Endothelial cell of umbilical vein (primary cell): ENCODE measurements at regions of chr11 and their contacts with region 1.

Region 1: DNA sequence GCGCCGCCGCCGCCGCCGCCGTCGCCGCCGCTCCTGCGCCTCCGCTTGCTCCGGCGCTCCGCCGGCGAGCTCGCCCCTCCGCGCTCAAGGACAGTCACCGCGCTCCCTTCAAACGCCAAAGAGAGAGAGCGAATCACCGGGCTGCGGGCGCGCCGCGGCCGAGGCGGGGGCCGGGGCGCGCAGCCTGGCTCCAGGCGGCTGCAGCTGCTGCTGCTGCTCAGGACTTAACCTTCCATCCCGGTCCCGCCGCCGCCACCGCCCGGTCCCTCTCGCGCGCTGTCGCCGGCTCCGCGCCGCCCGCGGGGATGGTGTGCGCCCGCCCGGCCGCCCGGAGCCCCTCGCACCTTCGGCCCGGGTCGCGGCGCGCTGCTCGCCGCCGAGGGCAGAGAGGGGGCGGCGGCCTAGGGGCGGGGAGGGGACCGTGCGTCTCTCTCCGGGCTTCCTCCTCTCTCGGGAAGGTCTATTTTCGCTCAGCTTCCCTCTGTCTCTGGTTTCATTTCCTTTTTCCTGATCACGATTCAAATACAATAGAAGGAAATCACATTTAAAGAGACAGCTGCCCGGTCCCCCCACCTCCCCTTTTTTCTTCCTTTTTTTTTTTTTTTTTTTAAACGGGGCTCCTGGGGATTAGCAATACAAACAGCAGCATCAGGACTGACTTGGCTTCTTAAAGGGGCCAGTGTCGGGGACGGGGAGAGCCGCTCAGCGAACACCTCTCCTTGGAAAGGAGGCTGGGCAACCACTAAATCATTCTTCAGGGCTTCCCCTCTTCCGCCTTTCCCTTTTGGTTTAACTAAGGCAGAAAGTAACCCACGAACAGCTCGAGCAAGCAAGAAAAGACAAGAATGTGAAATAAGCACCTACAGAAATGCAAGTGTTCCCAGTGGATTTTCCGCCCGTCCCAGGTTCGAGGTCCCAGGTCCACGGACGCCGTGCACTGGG is 22.1 kb downstream of the LMO2 start:
- DNase-seq: peak; percentile 92
- H3K4me3 ChIP-seq: peak overlapping the region; percentile 56 to 87 (median 76)
- H3K27ac ChIP-seq: peak overlapping the region; percentile 62
- H3K4me1 ChIP-seq: peaks cover 23% of the 10 kb centered on the region
- H3K27me3 ChIP-seq: peaks cover 0 to 2% of the 10 kb centered on the region in 2 experiments
- CTCF ChIP-seq: no peak
- POLR2A ChIP-seq: no peak

Region 2: DNA sequence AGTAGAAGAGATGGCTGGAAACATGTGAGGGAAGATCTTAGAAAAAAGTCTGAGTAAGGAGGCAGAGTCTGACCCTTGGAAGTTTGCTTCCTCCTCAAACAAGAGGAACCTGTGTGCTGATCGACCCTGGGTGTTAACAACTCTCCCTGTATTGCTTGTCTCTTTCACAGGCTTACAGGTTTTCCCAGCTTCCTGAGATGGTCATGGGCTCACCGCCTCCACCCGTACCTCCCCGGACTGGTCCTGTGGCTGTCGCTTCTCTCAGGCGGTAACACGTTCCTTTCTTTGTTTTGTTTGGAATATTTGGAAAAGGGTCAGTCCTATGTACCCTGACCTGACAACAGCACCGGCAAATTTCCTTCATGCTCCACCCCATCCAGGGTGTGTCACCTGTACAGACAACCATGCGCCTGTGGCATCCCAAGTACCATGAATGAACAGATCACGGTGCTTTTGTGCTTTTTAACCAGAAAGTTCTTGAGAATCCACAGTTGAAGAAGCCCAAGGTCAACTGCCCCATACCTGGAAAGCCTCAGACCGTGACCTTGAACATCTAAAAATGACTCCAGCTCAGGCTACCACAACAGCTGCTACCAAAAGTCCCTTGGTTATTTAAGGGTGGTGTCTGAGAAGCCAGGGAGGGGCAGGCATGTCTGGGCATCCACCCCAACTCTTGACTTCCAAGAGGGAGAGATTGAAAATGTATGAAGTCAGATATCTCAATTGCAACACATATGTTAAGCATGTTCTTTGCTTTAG is 213.7 kb before region 1 on chr11:
- CTCF ChIA-PET with region 1: no interaction called
- POLR2A ChIA-PET with region 1: no interaction called
- dilution Hi-C with region 1: no loop called
- intact Hi-C with region 1: no loop called
- DNase-seq: no peak
- H3K4me3 ChIP-seq: no peak overlapping the region
- H3K27ac ChIP-seq: no peak overlapping the region
- H3K4me1 ChIP-seq: no peaks in the 10 kb centered on the region
- H3K27me3 ChIP-seq: no peaks in the 10 kb centered on the region
- CTCF ChIP-seq: no peak
- POLR2A ChIP-seq: no peak

Region 3: DNA sequence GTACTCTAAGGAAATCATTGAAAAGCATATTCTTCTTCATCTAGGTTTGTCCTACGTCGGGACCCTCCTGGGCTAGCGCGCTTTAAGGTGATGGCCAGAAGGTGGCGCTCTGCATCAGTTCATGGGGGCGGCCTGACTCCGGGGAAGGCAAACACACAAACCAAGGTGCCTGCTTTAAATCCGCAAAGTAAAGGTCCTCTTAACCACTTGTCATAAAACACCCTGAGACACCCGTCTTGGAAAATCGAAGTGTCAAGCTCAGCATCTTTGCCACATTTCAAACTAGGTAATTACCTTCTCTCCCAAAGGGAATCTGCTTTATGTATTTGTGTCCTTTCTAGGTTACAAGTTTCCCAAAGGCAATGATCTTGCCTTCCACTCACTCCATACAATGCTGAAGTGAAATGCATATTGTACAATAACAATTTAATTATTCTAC is 11.8 kb before region 1 on chr11:
- CTCF ChIA-PET with region 1: interaction called, 39 read pairs
- POLR2A ChIA-PET with region 1: no interaction called
- dilution Hi-C with region 1: no loop called
- intact Hi-C with region 1: loop called (anchors 1 kb)
- DNase-seq: peak; percentile 85
- H3K4me3 ChIP-seq: no peak overlapping the region
- H3K27ac ChIP-seq: no peak overlapping the region
- H3K4me1 ChIP-seq: no peaks in the 10 kb centered on the region
- H3K27me3 ChIP-seq: no peaks in the 10 kb centered on the region
- CTCF ChIP-seq: peak; percentile 89 to 92
- POLR2A ChIP-seq: no peak

Region 4: DNA sequence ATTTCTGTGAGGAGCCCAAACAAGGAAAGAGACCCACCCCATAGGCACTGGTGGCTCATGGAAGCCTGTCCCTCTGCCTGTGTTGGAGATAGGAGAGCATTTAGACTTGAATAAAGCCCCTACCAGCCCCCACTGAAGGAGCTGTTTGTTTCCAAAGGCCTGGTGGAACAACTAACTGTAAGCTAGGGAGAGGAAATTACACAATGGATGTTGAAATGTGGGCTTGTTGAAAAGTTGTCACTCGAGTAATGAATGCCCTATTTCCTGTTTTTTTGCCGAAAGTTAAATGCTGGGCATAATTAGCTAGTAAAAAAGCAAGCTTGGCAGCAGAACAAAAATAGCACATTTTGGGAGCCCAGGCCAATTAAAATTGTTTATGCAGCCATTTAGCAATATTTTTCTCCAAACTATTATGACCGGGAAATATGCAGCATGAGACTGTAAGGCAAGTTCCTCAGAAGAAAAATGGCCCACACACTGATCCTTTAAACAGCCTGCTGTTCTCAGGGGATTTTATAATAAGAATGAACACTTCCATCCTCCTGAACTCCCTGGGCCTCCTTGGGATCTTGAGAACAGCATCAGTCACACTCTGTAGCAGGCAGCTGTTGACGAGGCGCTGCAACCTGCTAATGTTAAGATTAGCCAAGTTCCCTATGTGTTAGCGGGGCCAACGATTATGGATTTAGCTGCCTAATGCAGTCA is 60.7 kb after region 1 on chr11:
- CTCF ChIA-PET with region 1: interaction called, 7 read pairs
- POLR2A ChIA-PET with region 1: interaction called, 3 read pairs
- dilution Hi-C with region 1: no loop called
- intact Hi-C with region 1: loop called (anchors 2 kb)
- DNase-seq: peak; percentile 98
- H3K4me3 ChIP-seq: peak overlapping the region in 1 of 3 experiments; percentile 15
- H3K27ac ChIP-seq: peak overlapping the region; percentile 97
- H3K4me1 ChIP-seq: peaks cover 48% of the 10 kb centered on the region
- H3K27me3 ChIP-seq: no peaks in the 10 kb centered on the region
- CTCF ChIP-seq: no peak
- POLR2A ChIP-seq: peak; percentile 68

Region 5: GRCh38 chr11:33970984-33971466 is 101.3 kb after region 1 on chr11:
- CTCF ChIA-PET with region 1: interaction called, 65 read pairs
- POLR2A ChIA-PET with region 1: no interaction called
- dilution Hi-C with region 1: no loop called
- intact Hi-C with region 1: loop called (anchors 1 kb)
- DNase-seq: peak; percentile 72
- H3K4me3 ChIP-seq: no peak overlapping the region
- H3K27ac ChIP-seq: no peak overlapping the region
- H3K4me1 ChIP-seq: no peaks in the 10 kb centered on the region
- H3K27me3 ChIP-seq: peaks cover 0 to 4% of the 10 kb centered on the region in 2 experiments
- CTCF ChIP-seq: peak; percentile 70 to 74
- POLR2A ChIP-seq: no peak

Region 6: DNA sequence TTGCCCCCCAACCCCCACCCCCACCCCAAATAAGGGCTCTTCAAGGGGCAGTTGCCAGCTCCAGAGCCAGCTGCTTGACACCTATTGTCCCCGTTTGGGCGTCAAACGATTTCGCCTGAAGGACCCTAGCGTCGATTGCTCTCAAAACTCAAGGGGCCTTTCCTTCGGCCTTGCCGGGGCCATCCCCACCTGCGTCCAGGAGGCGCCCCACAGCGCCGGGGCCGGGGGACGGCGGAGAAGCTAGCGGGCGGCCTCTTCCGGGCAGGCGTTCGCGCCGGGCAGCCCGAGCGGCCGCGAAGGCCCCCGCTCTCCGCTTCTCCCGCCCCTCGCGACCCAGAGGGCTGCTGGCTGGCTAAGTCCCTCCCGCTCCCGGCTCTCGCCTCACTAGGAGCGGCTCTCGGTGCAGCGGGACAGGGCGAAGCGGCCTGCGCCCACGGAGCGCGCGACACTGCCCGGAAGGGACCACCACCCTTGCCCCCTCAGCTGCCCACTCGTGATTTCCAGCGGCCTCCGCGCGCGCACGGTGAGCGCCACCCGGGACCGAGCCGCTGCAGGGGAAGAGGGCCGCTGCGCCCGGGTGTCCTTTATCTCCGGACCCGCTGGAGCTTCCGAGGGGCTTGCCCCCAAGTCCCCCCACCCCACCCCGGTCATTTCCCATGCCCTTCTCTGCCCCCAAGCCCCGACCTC is 181.7 kb after region 1 on chr11 and contains the start of gene CAPRIN1:
- CTCF ChIA-PET with region 1: no interaction called
- POLR2A ChIA-PET with region 1: no interaction called
- dilution Hi-C with region 1: no loop called
- intact Hi-C with region 1: loop called (anchors 5 kb)
- DNase-seq: peak; percentile 89
- H3K4me3 ChIP-seq: peak within 1 kb of the TSS; percentile 65 to 97 (median 97)
- H3K27ac ChIP-seq: peak within 1 kb of the TSS; percentile 100
- H3K4me1 ChIP-seq: peaks cover 34% of the 10 kb centered on the region
- H3K27me3 ChIP-seq: no peaks in the 10 kb centered on the region
- CTCF ChIP-seq: no peak
- POLR2A ChIP-seq: peak; percentile 86
- total RNA-seq, gene CAPRIN1: 240 and 279 TPM in 2 replicates